ENCODE measurements at regions of chr16 and their contacts with region 1.

Region 1: DNA sequence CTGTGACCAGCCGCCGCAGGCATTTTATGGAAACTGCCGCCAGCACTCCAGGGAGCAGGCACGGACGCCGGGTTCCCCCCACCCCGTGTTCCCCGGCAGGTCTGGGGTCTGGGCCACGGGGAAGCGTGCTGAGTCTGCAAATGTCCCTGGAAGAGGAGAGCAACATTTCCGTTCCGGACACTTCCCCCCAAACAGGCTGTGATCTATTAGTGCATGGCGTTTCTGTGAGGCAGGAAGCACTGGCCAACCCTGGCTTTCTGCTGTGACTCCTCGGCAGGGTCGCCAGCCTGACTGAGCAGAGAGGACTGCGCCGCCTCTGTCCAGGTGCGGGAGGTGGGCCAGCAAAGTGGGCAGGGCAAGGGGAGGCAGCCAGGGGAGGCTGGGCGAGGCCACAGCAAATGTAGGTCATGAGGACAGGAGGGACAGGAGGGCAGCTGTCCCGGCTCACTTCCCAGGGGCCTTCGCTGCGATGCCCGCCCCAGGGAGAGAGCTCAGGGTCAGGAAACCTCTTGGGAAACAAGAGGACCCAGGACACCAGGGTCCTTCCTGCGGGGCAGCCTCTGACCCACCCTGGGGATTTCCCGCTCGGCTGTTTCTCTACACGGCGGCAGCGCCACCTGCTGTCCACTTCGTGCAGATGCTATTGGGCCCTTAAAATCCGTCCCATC is 9.5 kb downstream of the FOXF1 start:
- DNase-seq: peak; percentile 89
- H3K4me3 ChIP-seq: peak overlapping the region; percentile 1 to 37 (median 22)
- H3K27ac ChIP-seq: peak overlapping the region in 3 of 4 donors; percentile 99 to 100 (median 99)
- H3K4me1 ChIP-seq: peaks cover 0 to 45% (median 38%) of the 10 kb centered on the region in 4 donors
- H3K27me3 ChIP-seq: peaks cover 3 to 7% (median 3%) of the 10 kb centered on the region in 3 donors
- CTCF ChIP-seq: peak; percentile 89 to 93 (median 90)
- EP300 ChIP-seq: no peak
- POLR2A ChIP-seq: no peak

Region 2: GRCh38 chr16:85821441-85822135 is 698.2 kb before region 1 on chr16:
- intact Hi-C with region 1: loop called (anchors 2 kb)
- DNase-seq: peak; percentile 89
- H3K4me3 ChIP-seq: no peak overlapping the region
- H3K27ac ChIP-seq: no peak overlapping the region
- H3K4me1 ChIP-seq: peaks cover 0 to 10% (median 0%) of the 10 kb centered on the region in 4 donors
- H3K27me3 ChIP-seq: peaks cover 0 to 8% (median 4%) of the 10 kb centered on the region in 3 donors
- CTCF ChIP-seq: peak; percentile 94 to 99 (median 98)
- EP300 ChIP-seq: no peak
- POLR2A ChIP-seq: no peak

Region 3: DNA sequence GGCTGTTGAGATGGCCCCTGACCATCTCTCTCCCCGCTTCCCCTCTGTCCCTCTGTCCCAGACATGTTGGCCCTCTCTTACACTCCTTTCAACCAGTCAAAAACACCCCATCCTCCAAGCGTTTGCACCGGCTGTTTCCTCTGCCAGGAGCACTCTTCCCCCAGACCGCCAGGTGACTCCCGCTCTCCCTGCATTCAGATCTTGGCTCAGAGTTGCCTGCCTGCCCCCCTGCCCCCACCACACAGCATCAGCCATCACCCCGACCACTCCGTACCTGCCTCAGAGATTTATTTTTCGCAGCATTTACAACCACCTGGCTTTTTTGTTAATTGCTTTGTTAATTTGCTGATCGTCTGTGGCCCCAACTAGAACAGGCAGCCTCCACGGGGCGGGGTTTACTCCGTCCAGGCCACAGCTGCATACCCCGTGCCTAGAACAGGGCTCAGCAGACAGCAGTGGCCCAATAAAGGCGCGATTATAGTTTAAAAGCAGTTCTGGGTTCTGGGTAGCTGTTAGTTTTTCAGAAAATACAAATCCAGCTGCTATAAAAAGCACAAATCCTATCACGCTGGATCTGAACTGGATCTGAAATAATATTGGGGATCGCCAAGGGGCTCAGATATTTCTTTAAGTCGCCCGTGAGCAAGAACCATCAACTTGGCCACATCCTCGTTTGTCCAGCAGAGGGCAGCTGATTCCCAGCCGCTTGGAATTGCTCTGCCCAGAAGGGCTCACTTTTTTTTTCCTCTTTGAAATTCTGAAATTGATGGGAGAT is 447.3 kb before region 1 on chr16:
- intact Hi-C with region 1: loop called (anchors 1 kb)
- DNase-seq: peak; percentile 89
- H3K4me3 ChIP-seq: no peak overlapping the region
- H3K27ac ChIP-seq: no peak overlapping the region
- H3K4me1 ChIP-seq: peaks cover 0 to 21% (median 8%) of the 10 kb centered on the region in 4 donors
- H3K27me3 ChIP-seq: no peaks in the 10 kb centered on the region
- CTCF ChIP-seq: peak; percentile 46 to 85 (median 78)
- EP300 ChIP-seq: no peak
- POLR2A ChIP-seq: no peak

Region 4: GRCh38 chr16:86157616-86158247 is 362.1 kb before region 1 on chr16:
- intact Hi-C with region 1: loop called (anchors 2 kb)
- DNase-seq: no peak
- H3K4me3 ChIP-seq: no peak overlapping the region
- H3K27ac ChIP-seq: peak overlapping the region in 3 of 4 donors; percentile 87 to 90 (median 89)
- H3K4me1 ChIP-seq: peaks cover 0 to 60% (median 27%) of the 10 kb centered on the region in 4 donors
- H3K27me3 ChIP-seq: no peaks in the 10 kb centered on the region
- CTCF ChIP-seq: no peak
- EP300 ChIP-seq: no peak
- POLR2A ChIP-seq: no peak

Region 5: DNA sequence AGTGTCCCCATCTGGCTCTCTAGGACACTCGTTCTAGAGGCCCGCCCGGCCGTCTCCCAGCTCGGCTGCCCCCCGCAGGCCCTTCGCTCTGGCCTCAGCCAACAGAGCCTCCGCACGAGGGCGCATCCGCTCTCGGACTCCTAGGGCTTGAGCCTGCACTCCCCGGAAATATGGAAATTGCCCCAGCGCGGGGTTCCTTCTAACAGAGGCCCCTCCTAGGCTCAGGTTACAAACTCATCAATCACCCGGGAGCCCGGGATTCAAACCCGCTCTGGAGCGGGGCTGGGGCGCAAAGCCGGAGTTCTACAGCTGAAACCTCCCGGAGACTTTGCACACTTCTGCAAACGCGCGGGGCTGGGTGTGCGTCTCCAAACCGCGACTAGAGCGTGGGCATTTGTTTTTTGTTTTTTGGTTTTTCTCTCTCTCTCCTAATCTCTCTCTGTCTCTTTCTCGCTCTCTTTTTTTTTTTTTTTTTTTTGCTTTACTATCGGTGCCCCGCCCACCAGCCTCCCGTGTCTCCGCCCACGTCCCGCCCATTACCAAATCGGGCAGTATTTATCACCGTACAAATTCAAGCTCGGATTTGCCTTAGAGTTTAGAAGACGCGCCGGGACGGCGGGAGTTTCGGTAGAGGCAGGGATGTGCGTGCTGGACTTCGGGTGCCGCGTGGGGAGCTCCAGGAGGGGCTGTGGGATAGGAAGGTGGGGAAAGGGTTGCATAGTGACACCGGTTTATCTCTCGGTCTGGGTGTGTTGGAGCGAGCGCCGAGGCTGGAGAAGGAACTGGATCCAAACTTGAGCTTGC is 56.2 kb after region 1 on chr16:
- intact Hi-C with region 1: no loop called
- DNase-seq: no peak
- H3K4me3 ChIP-seq: peak overlapping the region in 3 of 4 donors; percentile 26 to 35 (median 33)
- H3K27ac ChIP-seq: peak overlapping the region in 2 of 4 donors; percentile 2 to 58
- H3K4me1 ChIP-seq: peaks cover 0 to 31% (median 20%) of the 10 kb centered on the region in 4 donors
- H3K27me3 ChIP-seq: peaks cover 49 to 100% (median 83%) of the 10 kb centered on the region in 3 donors
- CTCF ChIP-seq: peak in 2 of 4 experiments; percentile 19 to 22
- EP300 ChIP-seq: no peak
- POLR2A ChIP-seq: no peak